Caco-2 (cell line): ENCODE measurements at regions of chr5 and their contacts with region 1.

Region 1: GRCh38 chr5:160342403-160342941 is 28.0 kb downstream of the C1QTNF2 start:
- DNase-seq: no peak
- H3K4me3 ChIP-seq: no peak overlapping the region
- H3K4me3 Mint-ChIP-seq: no peak overlapping the region
- H3K27ac Mint-ChIP-seq: no peak overlapping the region
- H3K4me1 ChIP-seq: peaks cover 5% of the 10 kb centered on the region; the same call in 1 of the 2 replicates
- H3K4me1 Mint-ChIP-seq: no peaks in the 10 kb centered on the region
- H3K27me3 ChIP-seq: no peaks in the 10 kb centered on the region
- H3K27me3 Mint-ChIP-seq: no peaks in the 10 kb centered on the region
- CTCF ChIP-seq: no peak

Region 2: DNA sequence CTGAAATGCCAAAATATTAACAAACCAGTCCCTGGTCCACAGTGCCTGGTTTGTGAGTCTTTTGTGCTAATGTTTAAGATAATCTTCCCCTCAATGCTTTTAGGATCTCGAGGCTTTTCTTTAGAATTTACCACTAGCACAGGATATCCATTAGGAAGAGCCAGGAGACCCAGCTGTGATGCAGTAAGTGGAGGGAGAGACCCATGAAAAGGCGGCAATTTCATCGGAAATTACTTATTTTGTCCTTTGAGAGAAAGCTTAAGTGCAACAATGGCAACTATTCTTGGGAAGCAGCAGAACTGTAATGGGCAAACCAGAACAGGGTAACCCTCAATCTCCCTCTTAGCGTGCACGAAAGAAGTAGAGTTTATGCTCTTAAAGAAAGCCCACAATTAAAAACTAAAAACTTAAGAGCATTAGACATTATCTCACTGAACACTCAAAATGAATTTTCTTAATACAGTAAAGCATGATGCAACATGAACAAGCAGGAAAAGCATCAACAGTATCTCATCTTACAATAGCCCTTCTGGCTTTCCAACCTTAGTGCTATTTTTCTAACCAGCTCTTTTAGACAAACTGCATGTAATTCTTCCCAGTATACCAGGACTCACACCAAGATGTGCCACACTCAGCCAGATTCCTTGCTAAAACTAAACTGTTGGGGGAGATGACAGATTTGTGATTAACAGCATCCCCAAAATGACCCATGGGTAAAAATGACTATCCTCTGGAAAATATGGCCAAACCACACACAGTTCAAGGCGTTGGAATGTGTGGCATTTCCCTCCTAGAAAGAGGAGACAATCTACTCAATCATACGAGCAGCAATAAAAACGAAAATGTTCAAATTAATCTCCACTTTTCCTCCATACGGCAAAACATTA is 259.6 kb before region 1 on chr5:
- CTCF ChIA-PET with region 1: interaction called, 5 read pairs
- POLR2A ChIA-PET with region 1: no interaction called
- intact Hi-C with region 1: loop called (anchors 1 kb)
- DNase-seq: no peak
- H3K4me3 ChIP-seq: no peak overlapping the region
- H3K4me3 Mint-ChIP-seq: no peak overlapping the region
- H3K27ac Mint-ChIP-seq: no peak overlapping the region
- H3K4me1 ChIP-seq: peaks cover 34% of the 10 kb centered on the region
- H3K4me1 Mint-ChIP-seq: peaks cover 25% of the 10 kb centered on the region
- H3K27me3 ChIP-seq: no peaks in the 10 kb centered on the region
- H3K27me3 Mint-ChIP-seq: no peaks in the 10 kb centered on the region
- CTCF ChIP-seq: no peak

Region 3: GRCh38 chr5:160199410-160199911 is 143.0 kb before region 1 on chr5:
- CTCF ChIA-PET with region 1: interaction called, 19 read pairs
- POLR2A ChIA-PET with region 1: no interaction called
- intact Hi-C with region 1: loop called (anchors 1 kb)
- DNase-seq: peak; percentile 62 to 90
- H3K4me3 ChIP-seq: peak overlapping the region; percentile 37
- H3K4me3 Mint-ChIP-seq: peak overlapping the region; percentile 78
- H3K27ac Mint-ChIP-seq: peak overlapping the region; percentile 75
- H3K4me1 ChIP-seq: peaks cover 21% of the 10 kb centered on the region
- H3K4me1 Mint-ChIP-seq: peaks cover 19% of the 10 kb centered on the region
- H3K27me3 ChIP-seq: no peaks in the 10 kb centered on the region
- H3K27me3 Mint-ChIP-seq: no peaks in the 10 kb centered on the region
- CTCF ChIP-seq: peak; percentile 63 to 94

Region 4: DNA sequence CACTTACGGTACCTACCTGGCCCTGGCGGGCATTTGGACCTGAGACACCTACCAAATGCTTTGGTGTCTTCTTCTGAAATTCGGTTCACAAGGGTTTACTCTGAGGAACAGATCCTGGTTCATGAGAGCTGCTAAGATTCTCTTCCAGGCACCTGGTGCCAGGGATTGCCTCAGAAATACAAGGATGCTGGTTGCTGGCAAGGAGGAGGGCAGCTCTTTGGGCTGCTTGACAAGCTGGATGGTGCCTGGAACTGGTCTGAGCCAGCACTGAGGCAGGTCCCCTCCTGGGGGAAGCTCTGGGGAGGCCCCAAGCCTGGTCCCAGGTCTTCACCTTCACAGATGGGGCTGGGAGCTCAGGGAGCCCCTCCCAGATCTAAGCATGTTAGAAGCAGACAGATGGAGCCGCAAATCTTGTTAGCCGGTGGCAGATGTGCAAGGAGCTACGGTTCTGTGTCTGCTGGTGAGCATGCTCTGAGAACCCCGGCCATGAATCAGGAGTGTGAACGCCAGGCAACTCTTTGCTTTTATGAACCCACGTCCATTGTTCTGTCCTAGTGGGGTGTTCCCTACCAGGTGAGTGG is 96.9 kb before region 1 on chr5:
- CTCF ChIA-PET with region 1: interaction called, 19 read pairs
- POLR2A ChIA-PET with region 1: no interaction called
- intact Hi-C with region 1: loop called (anchors 1 kb)
- DNase-seq: no peak
- H3K4me3 ChIP-seq: no peak overlapping the region
- H3K4me3 Mint-ChIP-seq: no peak overlapping the region
- H3K27ac Mint-ChIP-seq: no peak overlapping the region
- H3K4me1 ChIP-seq: peaks cover 14% of the 10 kb centered on the region; the same call in 1 of the 2 replicates
- H3K4me1 Mint-ChIP-seq: peaks cover 10% of the 10 kb centered on the region
- H3K27me3 ChIP-seq: no peaks in the 10 kb centered on the region
- H3K27me3 Mint-ChIP-seq: no peaks in the 10 kb centered on the region
- CTCF ChIP-seq: no peak

Region 5: GRCh38 chr5:160287378-160288051 is 55.0 kb before region 1 on chr5:
- CTCF ChIA-PET with region 1: interaction called, 4 read pairs
- POLR2A ChIA-PET with region 1: no interaction called
- intact Hi-C with region 1: loop called (anchors 1 kb)
- DNase-seq: peak; percentile 79 to 89
- H3K4me3 ChIP-seq: no peak overlapping the region
- H3K4me3 Mint-ChIP-seq: peak overlapping the region; percentile 29
- H3K27ac Mint-ChIP-seq: peak overlapping the region; percentile 94
- H3K4me1 ChIP-seq: peaks cover 35% of the 10 kb centered on the region
- H3K4me1 Mint-ChIP-seq: peaks cover 19% of the 10 kb centered on the region
- H3K27me3 ChIP-seq: no peaks in the 10 kb centered on the region
- H3K27me3 Mint-ChIP-seq: no peaks in the 10 kb centered on the region
- CTCF ChIP-seq: no peak

Region 6: GRCh38 chr5:160390787-160391696 is 48.6 kb after region 1 on chr5:
- CTCF ChIA-PET with region 1: interaction called, 5 read pairs
- POLR2A ChIA-PET with region 1: no interaction called
- intact Hi-C with region 1: loop called (anchors 1 kb)
- DNase-seq: no peak
- H3K4me3 ChIP-seq: no peak overlapping the region
- H3K4me3 Mint-ChIP-seq: no peak overlapping the region
- H3K27ac Mint-ChIP-seq: no peak overlapping the region
- H3K4me1 ChIP-seq: no peaks in the 10 kb centered on the region
- H3K4me1 Mint-ChIP-seq: no peaks in the 10 kb centered on the region
- H3K27me3 ChIP-seq: no peaks in the 10 kb centered on the region
- H3K27me3 Mint-ChIP-seq: no peaks in the 10 kb centered on the region
- CTCF ChIP-seq: peak; percentile 43 to 49